Activated CD8-positive, alpha-beta T cell treated with anti-CD3 and anti-CD28 coated beads for 36 hours (primary cell): ENCODE measurements at regions of chr1 and their contacts with region 1.

Region 1: GRCh38 chr1:78491451-78492071 is 787 bp downstream of the PTGFR start:
- DNase-seq: no peak
- ATAC-seq: no peak
- H3K4me3 Mint-ChIP-seq: no peak overlapping the region
- H3K27ac Mint-ChIP-seq: no peak overlapping the region
- H3K4me1 Mint-ChIP-seq: peaks cover 2% of the 10 kb centered on the region
- H3K27me3 Mint-ChIP-seq: peaks cover 38% of the 10 kb centered on the region
- CTCF ChIP-seq: no peak

Region 2: GRCh38 chr1:78333502-78333901 is 158.1 kb before region 1 on chr1:
- CTCF ChIA-PET with region 1: interaction called, 3 read pairs
- POLR2A ChIA-PET with region 1: no interaction called
- intact Hi-C with region 1: loop called (anchors 10 kb)
- DNase-seq: peak; percentile 2
- ATAC-seq: peak; percentile 55
- H3K4me3 Mint-ChIP-seq: no peak overlapping the region
- H3K27ac Mint-ChIP-seq: no peak overlapping the region
- H3K4me1 Mint-ChIP-seq: no peaks in the 10 kb centered on the region
- H3K27me3 Mint-ChIP-seq: peaks cover 2% of the 10 kb centered on the region
- CTCF ChIP-seq: peak; percentile 78

Region 3: GRCh38 chr1:78370356-78370755 is 121.2 kb before region 1 on chr1:
- CTCF ChIA-PET with region 1: no interaction called
- POLR2A ChIA-PET with region 1: no interaction called
- intact Hi-C with region 1: no loop called
- DNase-seq: no peak
- ATAC-seq: no peak
- H3K4me3 Mint-ChIP-seq: no peak overlapping the region
- H3K27ac Mint-ChIP-seq: no peak overlapping the region
- H3K4me1 Mint-ChIP-seq: no peaks in the 10 kb centered on the region
- H3K27me3 Mint-ChIP-seq: no peaks in the 10 kb centered on the region
- CTCF ChIP-seq: no peak